ENCODE measurements at regions of chr12 and their contacts with region 1.

Region 1: GRCh38 chr12:53059434-53060063 is 9.7 kb downstream of the TNS2 start:
- DNase-seq: no peak
- ATAC-seq: no peak
- H3K4me3 ChIP-seq: no peak overlapping the region
- H3K4me3 Mint-ChIP-seq: no peak overlapping the region
- H3K27ac ChIP-seq: no peak overlapping the region
- H3K27ac Mint-ChIP-seq: no peak overlapping the region
- H3K4me1 ChIP-seq: peaks cover 0 to 5% of the 10 kb centered on the region in 2 donors
- H3K4me1 Mint-ChIP-seq: peaks cover 2% of the 10 kb centered on the region
- H3K27me3 ChIP-seq: peaks cover 0 to 10% (median 0%) of the 10 kb centered on the region in 4 experiments
- H3K27me3 Mint-ChIP-seq: no peaks in the 10 kb centered on the region
- CTCF ChIP-seq: no peak

Region 2: GRCh38 chr12:53391729-53392128 is 332.2 kb after region 1 on chr12:
- CTCF ChIA-PET with region 1: no interaction called
- POLR2A ChIA-PET with region 1: no interaction called
- intact Hi-C with region 1: no loop called
- DNase-seq: no peak
- ATAC-seq: no peak
- H3K4me3 ChIP-seq: no peak overlapping the region
- H3K4me3 Mint-ChIP-seq: no peak overlapping the region
- H3K27ac ChIP-seq: no peak overlapping the region
- H3K27ac Mint-ChIP-seq: no peak overlapping the region
- H3K4me1 ChIP-seq: peaks cover 14 to 25% of the 10 kb centered on the region in 2 donors
- H3K4me1 Mint-ChIP-seq: peaks cover 40% of the 10 kb centered on the region
- H3K27me3 ChIP-seq: no peaks in the 10 kb centered on the region
- H3K27me3 Mint-ChIP-seq: no peaks in the 10 kb centered on the region
- CTCF ChIP-seq: no peak

Region 3: GRCh38 chr12:53757095-53757770 is 697.7 kb after region 1 on chr12:
- CTCF ChIA-PET with region 1: no interaction called
- POLR2A ChIA-PET with region 1: interaction called, 11 read pairs
- intact Hi-C with region 1: no loop called
- DNase-seq: peak; percentile 83
- ATAC-seq: peak; percentile 66
- H3K4me3 ChIP-seq: no peak overlapping the region
- H3K4me3 Mint-ChIP-seq: peak overlapping the region; percentile 54
- H3K27ac ChIP-seq: no peak overlapping the region
- H3K27ac Mint-ChIP-seq: no peak overlapping the region
- H3K4me1 ChIP-seq: peaks cover 53 to 61% of the 10 kb centered on the region in 2 donors
- H3K4me1 Mint-ChIP-seq: peaks cover 20% of the 10 kb centered on the region
- H3K27me3 ChIP-seq: peaks cover 0 to 34% (median 10%) of the 10 kb centered on the region in 4 experiments
- H3K27me3 Mint-ChIP-seq: peaks cover 34% of the 10 kb centered on the region
- CTCF ChIP-seq: peak; percentile 93